Dorsolateral prefrontal cortex (tissue), 120 donors: ENCODE measurements at regions of chr2 and their contacts with region 1.

Region 1: DNA sequence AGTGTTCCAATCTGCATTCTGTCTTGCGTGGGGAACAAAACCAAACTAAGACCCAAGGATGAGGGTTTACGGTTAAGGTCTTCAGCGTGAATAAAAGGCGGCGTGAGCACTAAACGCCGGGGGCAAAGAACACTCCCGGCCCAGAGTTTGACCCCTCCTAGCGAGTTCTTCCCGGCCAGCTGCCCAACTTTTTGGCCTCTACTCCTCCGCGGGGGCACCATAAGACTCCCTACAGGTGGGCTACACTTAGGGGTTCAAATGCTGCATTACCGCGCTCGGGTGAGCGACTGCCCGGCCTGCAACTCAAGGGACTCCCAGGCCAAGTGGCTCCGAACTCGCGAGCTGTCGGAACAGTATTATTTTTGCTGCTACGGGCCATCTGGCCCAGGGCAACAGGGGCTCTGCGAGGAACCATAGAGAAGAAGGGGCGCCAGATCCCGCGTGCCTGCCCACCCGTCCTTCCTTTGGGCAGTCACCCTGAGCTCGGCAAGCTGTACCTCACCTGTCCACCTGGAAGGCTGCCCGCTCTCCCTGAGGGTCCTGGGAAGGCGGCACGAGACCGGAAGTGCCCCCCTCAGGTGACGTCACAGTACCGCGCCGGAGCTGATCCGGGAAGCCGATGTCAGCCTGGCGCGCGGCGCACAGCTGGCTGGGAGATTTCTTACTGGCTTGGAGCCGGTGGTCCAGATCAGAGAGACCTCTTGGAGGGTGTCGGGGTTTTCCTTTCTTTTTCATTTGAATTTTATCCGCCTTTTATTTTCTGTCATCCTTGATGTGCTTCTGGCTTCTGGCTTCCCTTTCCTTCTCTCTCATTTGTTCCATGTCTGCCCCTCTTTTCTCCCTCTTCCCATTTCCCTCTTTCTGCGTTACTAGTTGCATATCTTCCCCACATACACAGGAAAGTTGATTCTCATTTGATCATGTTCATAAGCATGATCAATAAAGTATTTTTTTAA is at the start of gene LDAH:
- DNase-seq: peak; percentile 74 to 89 (median 86)
- H3K4me3 ChIP-seq: peak within 1 kb of the TSS; percentile 67 to 99 (median 89)
- H3K27ac ChIP-seq: peak within 1 kb of the TSS in 53 of 59 donors; percentile 8 to 90 (median 75)
- H3K27me3 ChIP-seq: no peaks in the 10 kb centered on the region
- CTCF ChIP-seq: peak in 12 of 56 donors; percentile 7 to 32 (median 14)
- total RNA-seq, gene LDAH: 8.1 to 24.0 (median 15.8) TPM

Region 2: GRCh38 chr2:20617892-20618467 is 204.8 kb before region 1 on chr2:
- intact Hi-C with region 1: no loop called
- DNase-seq: peak; percentile 85 to 96 (median 94)
- H3K4me3 ChIP-seq: peak overlapping the region in 2 of 59 donors; percentile 2 to 18
- H3K27ac ChIP-seq: peak overlapping the region; percentile 79 to 99 (median 94)
- H3K27me3 ChIP-seq: no peaks in the 10 kb centered on the region
- CTCF ChIP-seq: peak in 52 of 56 donors; percentile 16 to 70 (median 54)

Region 3: GRCh38 chr2:20650880-20651730 is 171.7 kb before region 1 on chr2 and contains the start of gene HS1BP3:
- intact Hi-C with region 1: loop called in 1 of 2 experiments (anchors 5 kb)
- DNase-seq: peak; percentile 54 to 94 (median 82)
- H3K4me3 ChIP-seq: peak within 1 kb of the TSS; percentile 77 to 100 (median 99)
- H3K27ac ChIP-seq: peak within 1 kb of the TSS; percentile 79 to 99 (median 95)
- H3K27me3 ChIP-seq: no peaks in the 10 kb centered on the region
- CTCF ChIP-seq: peak; percentile 41 to 99 (median 88)
- total RNA-seq, gene HS1BP3: 18.3 to 36.0 (median 26.0) TPM

Region 4: DNA sequence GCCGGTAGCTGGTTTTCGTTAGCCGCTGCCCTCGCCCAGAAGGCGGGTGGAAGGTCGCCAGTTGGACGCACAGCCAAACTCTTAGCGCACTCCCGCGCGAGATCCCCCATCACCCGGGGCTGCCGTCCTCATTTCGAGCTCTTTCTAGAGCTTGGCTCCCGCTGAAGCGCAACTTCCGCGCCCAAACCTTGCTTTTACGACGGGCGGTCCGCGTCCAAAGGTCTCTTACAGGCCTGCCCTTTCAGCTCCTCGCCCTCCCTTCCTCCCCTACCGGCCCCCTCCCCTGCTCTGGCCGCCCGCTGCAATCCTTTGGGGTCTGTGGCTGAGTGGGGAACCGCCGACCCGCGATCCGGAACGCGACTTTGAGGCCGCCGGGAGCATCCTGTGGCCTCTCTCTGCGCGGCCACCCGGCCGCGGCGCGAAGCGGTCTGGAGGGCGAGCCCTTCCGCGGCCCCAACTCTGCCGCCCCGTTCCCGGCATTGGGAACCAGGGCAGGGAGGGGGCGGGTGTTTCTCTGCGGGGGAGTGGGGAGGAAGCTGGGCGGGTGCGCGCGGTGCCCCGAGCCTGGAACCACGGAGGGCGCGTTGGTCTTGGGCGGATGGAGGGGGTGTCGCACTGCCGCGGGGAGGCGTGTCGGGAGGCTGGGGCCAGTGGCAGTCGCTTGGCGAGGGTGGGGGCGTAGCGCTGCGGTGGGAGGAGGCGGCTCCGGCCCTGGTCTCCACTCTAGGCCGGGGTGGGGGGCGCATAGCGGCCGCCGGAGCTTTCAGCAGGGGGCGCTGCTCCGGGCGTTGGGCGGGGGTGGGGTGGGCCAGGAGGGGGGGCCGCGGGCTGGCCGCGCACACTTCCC is 156.3 kb before region 1 on chr2 and contains the start of gene GDF7:
- intact Hi-C with region 1: loop called in 1 of 2 experiments (anchors 5 kb)
- DNase-seq: no peak
- H3K4me3 ChIP-seq: peak within 1 kb of the TSS; percentile 6 to 66 (median 46)
- H3K27ac ChIP-seq: peak within 1 kb of the TSS in 7 of 59 donors; percentile 4 to 67 (median 18)
- H3K27me3 ChIP-seq: peaks cover 0 to 98% (median 83%) of the 10 kb centered on the region in 45 donors
- CTCF ChIP-seq: peak in 27 of 56 donors; percentile 6 to 44 (median 27)
- total RNA-seq, gene GDF7: 0.95 to 12.5 (median 4.1) TPM

Region 5: GRCh38 chr2:20976527-20976926 is 153.7 kb after region 1 on chr2:
- intact Hi-C with region 1: no loop called
- DNase-seq: no peak
- H3K4me3 ChIP-seq: no peak overlapping the region
- H3K27ac ChIP-seq: no peak overlapping the region
- H3K27me3 ChIP-seq: peaks cover 0 to 10% (median 0%) of the 10 kb centered on the region in 45 donors
- CTCF ChIP-seq: no peak